Calu3 (cell line): ENCODE measurements at regions of chr10 and their contacts with region 1.

Region 1: DNA sequence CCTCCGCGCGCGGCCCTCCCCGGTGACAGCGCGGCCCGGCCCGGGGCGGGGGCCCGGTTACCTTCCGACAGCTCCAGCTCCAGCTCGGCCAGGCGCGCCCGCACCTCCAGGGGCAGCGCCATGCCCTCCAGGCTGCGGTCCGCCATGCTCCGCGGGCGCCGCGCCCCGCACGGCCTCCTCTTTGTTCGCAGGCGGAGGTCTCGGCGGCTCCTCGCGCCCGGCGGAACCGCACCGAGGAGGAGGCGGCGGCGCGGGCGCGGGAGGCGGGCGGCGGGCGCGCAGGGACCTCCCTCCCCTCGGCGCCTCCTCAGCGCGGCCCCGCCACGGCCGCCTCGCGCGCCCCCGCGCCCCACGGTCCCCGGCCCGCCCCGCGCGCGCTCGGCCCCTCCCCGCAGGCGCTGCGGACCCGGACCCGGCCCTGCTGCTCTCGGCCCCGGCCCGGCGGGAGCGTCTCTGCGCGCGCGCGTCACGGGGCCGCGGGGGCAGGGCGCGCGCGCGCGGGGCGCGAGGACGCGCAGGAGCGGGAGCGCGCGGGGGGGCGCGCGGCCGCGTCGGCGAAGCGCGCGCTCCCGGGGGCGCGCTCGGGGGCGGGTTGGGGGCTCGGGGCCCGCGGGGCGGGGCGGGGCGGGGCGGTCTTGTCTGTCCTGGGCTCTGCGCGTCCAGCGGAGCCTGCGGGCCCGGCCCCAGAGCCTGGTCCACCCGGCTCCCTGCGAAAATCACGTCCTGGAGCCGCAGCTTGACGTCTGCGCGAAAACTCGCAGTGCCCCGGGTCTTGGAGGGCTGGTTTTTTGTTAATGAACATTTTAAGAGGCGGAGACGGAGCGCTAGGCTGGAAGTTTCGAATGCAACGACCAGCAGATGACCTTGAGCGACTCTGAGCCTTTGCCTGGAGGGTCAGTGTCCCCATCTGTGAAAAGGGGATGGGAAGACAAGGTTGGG is at the start of gene DIP2C:
- DNase-seq: peak; percentile 77
- H3K4me3 Mint-ChIP-seq: peak within 1 kb of the TSS; percentile 78
- H3K27ac Mint-ChIP-seq: peak within 1 kb of the TSS; percentile 81
- H3K4me1 Mint-ChIP-seq: peaks cover 22% of the 10 kb centered on the region
- H3K27me3 Mint-ChIP-seq: no peaks in the 10 kb centered on the region
- CTCF ChIP-seq: no peak
- total RNA-seq, gene DIP2C: 11.0 and 13.2 TPM in 2 replicates

Region 2: DNA sequence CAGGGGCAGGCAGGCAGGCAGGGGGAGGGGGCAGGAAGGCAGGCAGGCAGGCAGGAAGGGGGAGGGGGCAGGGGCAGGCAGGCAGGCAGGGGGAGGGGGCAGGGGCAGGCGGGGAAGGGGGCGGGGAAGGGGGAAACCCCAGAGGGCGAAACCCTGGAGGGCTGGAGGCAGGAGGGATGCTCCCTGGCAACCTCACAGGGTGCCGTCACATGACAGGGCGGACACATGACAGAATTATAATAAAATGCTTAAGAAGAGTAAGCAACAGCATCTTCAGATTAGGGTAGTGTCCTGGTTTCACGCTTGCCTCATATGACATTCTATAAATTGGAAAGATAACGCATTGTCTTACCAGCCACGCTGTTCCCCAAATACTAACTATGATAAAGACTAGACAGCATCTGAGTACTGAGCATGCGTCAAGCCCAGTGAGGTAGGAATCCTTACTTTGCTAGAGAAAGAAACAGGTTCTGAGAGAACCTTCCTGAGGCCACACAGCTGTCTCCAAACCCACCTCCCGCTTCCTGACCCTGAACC is 131.8 kb before region 1 on chr10:
- CTCF ChIA-PET with region 1: no interaction called
- intact Hi-C with region 1: no loop called
- DNase-seq: no peak
- H3K4me3 Mint-ChIP-seq: no peak overlapping the region
- H3K27ac Mint-ChIP-seq: no peak overlapping the region
- H3K4me1 Mint-ChIP-seq: peaks cover 35% of the 10 kb centered on the region
- H3K27me3 Mint-ChIP-seq: no peaks in the 10 kb centered on the region
- CTCF ChIP-seq: no peak

Region 3: DNA sequence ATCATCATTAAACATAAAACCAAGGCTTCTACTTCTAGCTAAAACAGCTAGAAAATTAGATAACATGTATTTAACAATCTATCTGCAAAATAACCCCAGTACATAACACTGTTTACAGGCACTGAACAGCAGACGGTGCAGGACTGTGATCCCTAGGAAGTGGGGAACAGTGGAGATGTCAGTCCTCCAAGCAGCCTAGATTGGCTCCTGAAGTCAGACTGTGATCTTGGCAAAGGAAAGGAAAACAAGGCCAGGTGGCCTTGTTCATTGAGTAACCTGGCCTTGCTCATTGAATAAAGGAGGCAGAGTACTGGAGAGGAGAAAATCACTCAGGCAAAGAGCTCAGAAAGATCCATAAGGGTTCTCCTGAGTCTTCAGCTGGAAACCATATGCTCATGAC is 77.5 kb after region 1 on chr10:
- CTCF ChIA-PET with region 1: no interaction called
- intact Hi-C with region 1: no loop called
- DNase-seq: no peak
- H3K4me3 Mint-ChIP-seq: no peak overlapping the region
- H3K27ac Mint-ChIP-seq: no peak overlapping the region
- H3K4me1 Mint-ChIP-seq: no peaks in the 10 kb centered on the region
- H3K27me3 Mint-ChIP-seq: peaks cover 10% of the 10 kb centered on the region
- CTCF ChIP-seq: no peak

Region 4: GRCh38 chr10:784403-785088 is 94.8 kb after region 1 on chr10:
- CTCF ChIA-PET with region 1: no interaction called
- intact Hi-C with region 1: loop called (anchors 5 kb)
- DNase-seq: peak; percentile 63
- H3K4me3 Mint-ChIP-seq: peak overlapping the region; percentile 60
- H3K27ac Mint-ChIP-seq: peak overlapping the region; percentile 47
- H3K4me1 Mint-ChIP-seq: no peaks in the 10 kb centered on the region
- H3K27me3 Mint-ChIP-seq: no peaks in the 10 kb centered on the region
- CTCF ChIP-seq: no peak

Region 5: DNA sequence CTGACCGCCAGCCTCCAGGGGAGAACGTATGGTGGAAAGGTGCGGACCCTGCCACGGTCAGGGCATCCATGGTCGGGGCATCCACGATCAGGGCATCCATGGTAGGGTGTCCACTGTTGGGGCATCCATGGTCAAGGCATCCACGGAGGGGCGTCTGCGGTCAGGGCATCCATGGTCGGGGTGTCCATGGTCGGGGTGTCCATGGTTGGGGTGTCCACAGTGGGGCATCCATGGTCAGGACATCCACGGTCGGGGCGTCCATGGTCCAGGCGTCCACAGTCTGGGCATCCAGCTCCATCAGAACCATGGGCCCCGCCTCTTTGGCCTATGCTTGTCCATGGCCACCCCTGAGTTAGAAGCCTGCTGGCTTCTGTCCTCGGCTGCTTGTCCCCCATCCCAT is 899.6 kb after region 1 on chr10:
- CTCF ChIA-PET with region 1: no interaction called
- intact Hi-C with region 1: no loop called
- DNase-seq: no peak
- H3K4me3 Mint-ChIP-seq: no peak overlapping the region
- H3K27ac Mint-ChIP-seq: no peak overlapping the region
- H3K4me1 Mint-ChIP-seq: no peaks in the 10 kb centered on the region
- H3K27me3 Mint-ChIP-seq: no peaks in the 10 kb centered on the region
- CTCF ChIP-seq: no peak